Activated B cell treated with CpG ODN at 0.5 μM for 24 hours (primary cell): ENCODE measurements at regions of chrX and their contacts with region 1.

Region 1: GRCh38 chrX:153763989-153764755 is at the start of gene PLXNB3:
- DNase-seq: peak; percentile 68
- ATAC-seq: peak; percentile 90
- H3K4me3 Mint-ChIP-seq: no peak within 1 kb of the TSS
- H3K27ac Mint-ChIP-seq: no peak within 1 kb of the TSS
- H3K4me1 Mint-ChIP-seq: peaks cover 12% of the 10 kb centered on the region
- H3K27me3 Mint-ChIP-seq: no peaks in the 10 kb centered on the region
- CTCF ChIP-seq: peak; percentile 34
- total RNA-seq, gene PLXNB3: not detected in 2 replicates

Region 2: GRCh38 chrX:153521034-153521433 is 243.1 kb before region 1 on chrX:
- CTCF ChIA-PET with region 1: no interaction called
- POLR2A ChIA-PET with region 1: no interaction called
- intact Hi-C with region 1: no loop called
- DNase-seq: no peak
- ATAC-seq: no peak
- H3K4me3 Mint-ChIP-seq: no peak overlapping the region
- H3K27ac Mint-ChIP-seq: no peak overlapping the region
- H3K4me1 Mint-ChIP-seq: peaks cover 3% of the 10 kb centered on the region
- H3K27me3 Mint-ChIP-seq: peaks cover 18% of the 10 kb centered on the region
- CTCF ChIP-seq: no peak

Region 3: DNA sequence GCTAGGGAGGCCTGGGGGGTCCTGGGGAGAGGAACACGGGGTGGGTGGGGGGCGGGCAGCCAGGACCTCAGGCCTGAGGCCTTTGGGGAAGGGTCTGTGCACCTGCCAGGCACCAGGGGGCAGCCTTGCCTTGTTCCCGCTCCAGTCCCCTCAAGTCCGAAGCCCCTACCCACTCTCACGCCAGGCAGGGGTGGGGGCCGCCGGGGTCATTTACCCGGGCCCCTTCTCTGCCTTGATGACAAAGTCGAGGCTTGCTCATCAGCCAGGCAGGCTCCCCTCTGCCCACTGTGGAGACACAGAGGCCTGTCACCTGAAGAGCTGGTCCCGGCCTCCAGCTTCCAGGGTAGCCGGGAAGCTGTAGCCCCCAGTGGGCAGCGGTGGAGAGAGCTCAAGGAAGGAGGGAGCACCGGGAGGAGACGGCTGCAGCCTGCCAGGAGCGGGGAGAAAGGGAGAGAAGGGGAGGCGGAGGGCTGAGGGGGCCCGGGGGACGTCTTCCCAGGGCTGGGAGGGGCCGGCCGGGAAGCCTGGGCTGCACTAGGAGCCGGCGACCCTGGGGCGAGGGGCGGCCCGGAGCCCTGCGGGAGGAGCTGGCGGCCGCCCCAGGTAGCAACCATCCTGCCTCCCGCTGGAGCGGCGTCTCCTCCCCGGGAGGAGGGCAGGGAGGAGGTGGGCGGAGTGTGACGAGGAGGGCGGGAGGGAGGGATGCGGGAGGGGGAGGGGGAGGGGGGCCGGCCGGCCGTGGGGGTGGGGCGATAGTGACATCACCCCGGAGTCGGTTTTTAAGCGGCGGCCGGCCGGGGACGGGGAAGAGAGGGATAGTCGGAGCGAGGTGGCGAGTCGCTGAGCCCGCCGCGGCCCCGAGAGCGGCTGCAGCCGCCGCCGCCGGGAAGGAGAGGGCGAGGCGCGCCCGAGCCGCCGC is 76.8 kb before region 1 on chrX and contains the start of gene SLC6A8:
- CTCF ChIA-PET with region 1: interaction called, 3 read pairs
- POLR2A ChIA-PET with region 1: no interaction called
- intact Hi-C with region 1: loop called (anchors 10 kb)
- DNase-seq: peak; percentile 34
- ATAC-seq: peak; percentile 68
- H3K4me3 Mint-ChIP-seq: peak within 1 kb of the TSS; percentile 83
- H3K27ac Mint-ChIP-seq: no peak within 1 kb of the TSS
- H3K4me1 Mint-ChIP-seq: no peaks in the 10 kb centered on the region
- H3K27me3 Mint-ChIP-seq: peaks cover 3% of the 10 kb centered on the region
- CTCF ChIP-seq: no peak
- total RNA-seq, gene SLC6A8: 0.81 and 1.2 TPM in 2 replicates

Region 4: DNA sequence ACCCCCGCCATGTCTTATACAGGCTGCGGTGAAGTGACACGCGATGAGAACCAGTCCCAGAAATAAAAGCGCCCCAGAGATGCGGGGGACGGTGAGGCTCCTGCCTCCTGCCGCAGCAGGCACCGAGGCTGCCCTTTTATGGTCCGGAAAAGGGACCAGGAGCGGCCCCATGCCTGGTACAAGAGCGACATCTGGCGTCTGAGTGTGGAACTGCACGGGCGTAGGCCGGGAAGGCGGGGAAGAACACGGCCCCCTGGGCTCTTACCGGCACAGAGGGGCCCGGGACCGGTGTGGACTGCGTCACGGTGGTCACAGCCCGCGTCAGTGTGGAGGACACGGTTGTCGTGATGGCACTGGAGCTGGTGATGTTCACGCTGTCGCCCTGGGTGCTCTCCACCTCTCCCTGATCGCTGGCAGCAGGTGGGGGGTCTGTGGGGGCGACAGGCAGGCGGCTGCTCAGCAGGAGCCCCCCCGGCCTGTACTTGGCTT is 189.2 kb after region 1 on chrX:
- CTCF ChIA-PET with region 1: interaction called, 20 read pairs
- POLR2A ChIA-PET with region 1: no interaction called
- intact Hi-C with region 1: loop called (anchors 1 kb)
- DNase-seq: peak; percentile 68
- ATAC-seq: peak; percentile 88
- H3K4me3 Mint-ChIP-seq: no peak overlapping the region
- H3K27ac Mint-ChIP-seq: peak overlapping the region; percentile 46
- H3K4me1 Mint-ChIP-seq: peaks cover 2% of the 10 kb centered on the region
- H3K27me3 Mint-ChIP-seq: no peaks in the 10 kb centered on the region
- CTCF ChIP-seq: no peak

Region 5: GRCh38 chrX:154051201-154051810 is 287.1 kb after region 1 on chrX:
- CTCF ChIA-PET with region 1: no interaction called
- POLR2A ChIA-PET with region 1: no interaction called
- intact Hi-C with region 1: loop called (anchors 1 kb)
- DNase-seq: peak; percentile 24
- ATAC-seq: peak; percentile 73
- H3K4me3 Mint-ChIP-seq: no peak overlapping the region
- H3K27ac Mint-ChIP-seq: no peak overlapping the region
- H3K4me1 Mint-ChIP-seq: peaks cover 10% of the 10 kb centered on the region
- H3K27me3 Mint-ChIP-seq: no peaks in the 10 kb centered on the region
- CTCF ChIP-seq: no peak